Caco-2 (cell line): ENCODE measurements at regions of chr2 and their contacts with region 1.

Region 1: DNA sequence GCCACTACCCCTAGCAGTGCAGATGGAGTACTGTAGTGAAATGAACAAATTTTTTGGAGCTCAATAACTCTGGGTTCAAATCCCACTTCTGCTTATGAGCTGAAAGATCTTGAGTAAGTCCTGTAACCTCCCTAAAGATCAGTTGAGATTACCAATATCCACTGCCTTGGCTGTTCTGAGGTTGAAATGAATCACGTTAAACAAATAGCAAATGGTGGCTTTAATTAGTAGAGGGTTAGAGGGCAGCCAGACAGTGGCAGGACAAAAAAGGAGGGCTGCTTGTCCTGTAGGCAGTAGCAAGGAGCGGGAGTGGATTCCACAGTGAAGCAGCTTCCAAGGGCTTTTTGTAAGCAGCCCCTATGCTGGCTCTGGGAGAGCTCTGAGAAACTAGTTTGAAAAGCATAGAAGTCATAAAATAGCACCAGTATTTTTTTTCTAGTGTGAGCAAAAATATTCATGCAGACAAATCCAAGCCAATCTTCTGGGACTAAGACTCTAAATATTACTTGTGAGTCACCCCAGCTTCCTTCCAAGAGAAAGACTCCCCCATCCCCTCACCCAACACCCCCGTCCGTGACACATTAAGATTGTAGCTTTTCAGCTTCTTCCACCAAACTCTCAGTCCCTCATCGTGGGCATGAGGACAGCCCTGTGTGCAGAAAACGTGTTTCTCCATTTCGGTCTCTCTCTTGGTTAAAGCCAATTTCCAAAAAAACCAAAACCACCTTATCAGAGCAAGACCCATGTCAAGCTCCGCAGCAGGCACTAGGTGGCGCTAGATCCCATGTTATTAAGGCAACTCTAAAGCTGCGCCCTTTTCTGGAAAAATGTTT is 123.5 kb upstream of the LGALSL start:
- DNase-seq: peak; percentile 75 to 80
- H3K4me3 ChIP-seq: no peak overlapping the region
- H3K4me3 Mint-ChIP-seq: peak overlapping the region; percentile 30
- H3K27ac Mint-ChIP-seq: peak overlapping the region; percentile 46
- H3K4me1 ChIP-seq: no peaks in the 10 kb centered on the region
- H3K4me1 Mint-ChIP-seq: peaks cover 11% of the 10 kb centered on the region
- H3K27me3 ChIP-seq: no peaks in the 10 kb centered on the region
- H3K27me3 Mint-ChIP-seq: no peaks in the 10 kb centered on the region
- CTCF ChIP-seq: peak; percentile 90 to 95

Region 2: GRCh38 chr2:64052468-64053241 is 277.8 kb before region 1 on chr2:
- CTCF ChIA-PET with region 1: interaction called, 22 read pairs
- POLR2A ChIA-PET with region 1: no interaction called
- intact Hi-C with region 1: loop called (anchors 1 kb)
- DNase-seq: no peak
- H3K4me3 ChIP-seq: no peak overlapping the region
- H3K4me3 Mint-ChIP-seq: no peak overlapping the region
- H3K27ac Mint-ChIP-seq: peak overlapping the region; percentile 32
- H3K4me1 ChIP-seq: peaks cover 26% of the 10 kb centered on the region
- H3K4me1 Mint-ChIP-seq: peaks cover 41% of the 10 kb centered on the region
- H3K27me3 ChIP-seq: no peaks in the 10 kb centered on the region
- H3K27me3 Mint-ChIP-seq: no peaks in the 10 kb centered on the region
- CTCF ChIP-seq: no peak

Region 3: DNA sequence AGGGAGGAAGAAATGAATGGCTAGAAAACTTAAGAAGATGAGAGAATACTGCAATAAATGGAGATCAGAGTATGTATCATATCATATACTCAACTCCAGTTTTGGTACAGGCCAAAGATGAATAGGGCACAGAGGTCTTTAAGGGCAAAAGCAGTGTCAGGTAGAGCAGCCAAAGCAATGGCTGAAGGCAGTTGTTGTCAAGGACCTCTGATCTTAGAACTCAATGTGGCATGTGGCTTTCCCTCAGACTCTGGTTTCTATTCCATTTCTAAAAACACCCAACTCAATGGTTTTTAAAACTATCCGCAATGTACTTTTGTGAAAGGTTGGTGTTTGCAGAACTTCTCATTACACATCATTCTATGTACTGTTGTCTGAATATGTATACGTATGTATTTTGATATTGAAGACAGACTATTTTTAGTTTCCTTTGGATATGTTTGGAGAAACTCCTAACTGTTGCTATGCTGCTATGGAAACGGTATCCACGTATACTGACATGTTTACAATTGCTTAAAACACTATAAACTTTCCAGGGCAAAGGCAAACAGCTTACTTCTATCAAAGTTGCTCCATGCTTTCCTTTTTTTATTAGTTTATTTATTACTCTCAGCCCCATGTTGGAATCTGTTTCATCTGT is 128.2 kb before region 1 on chr2:
- CTCF ChIA-PET with region 1: no interaction called
- POLR2A ChIA-PET with region 1: no interaction called
- intact Hi-C with region 1: no loop called
- DNase-seq: peak in 1 of 2 experiments; percentile 17
- H3K4me3 ChIP-seq: no peak overlapping the region
- H3K4me3 Mint-ChIP-seq: no peak overlapping the region
- H3K27ac Mint-ChIP-seq: peak overlapping the region; percentile 81
- H3K4me1 ChIP-seq: peaks cover 29% of the 10 kb centered on the region
- H3K4me1 Mint-ChIP-seq: peaks cover 29% of the 10 kb centered on the region
- H3K27me3 ChIP-seq: no peaks in the 10 kb centered on the region
- H3K27me3 Mint-ChIP-seq: no peaks in the 10 kb centered on the region
- CTCF ChIP-seq: no peak

Region 4: DNA sequence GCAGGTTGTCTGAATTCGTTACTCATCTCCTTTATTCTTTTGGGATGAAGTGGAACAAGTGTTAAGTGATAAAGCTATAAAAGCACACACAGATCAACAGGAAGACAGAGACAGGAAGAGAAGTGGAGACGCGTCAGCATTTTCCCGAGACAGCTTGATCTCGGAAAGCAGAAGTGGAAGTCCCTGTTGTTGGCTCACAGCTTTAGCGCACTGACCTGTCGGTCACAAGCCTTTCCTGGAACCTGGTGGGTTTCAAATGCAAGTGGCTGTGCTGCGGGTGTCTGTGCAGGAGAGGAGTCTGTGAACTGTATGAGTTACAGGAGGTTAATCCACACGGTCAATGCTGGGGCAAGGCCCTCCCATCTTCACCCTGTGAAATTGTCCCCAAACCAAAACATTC is 69.7 kb before region 1 on chr2:
- CTCF ChIA-PET with region 1: no interaction called
- POLR2A ChIA-PET with region 1: no interaction called
- intact Hi-C with region 1: no loop called
- DNase-seq: no peak
- H3K4me3 ChIP-seq: no peak overlapping the region
- H3K4me3 Mint-ChIP-seq: no peak overlapping the region
- H3K27ac Mint-ChIP-seq: no peak overlapping the region
- H3K4me1 ChIP-seq: peaks cover 30% of the 10 kb centered on the region
- H3K4me1 Mint-ChIP-seq: peaks cover 31% of the 10 kb centered on the region
- H3K27me3 ChIP-seq: no peaks in the 10 kb centered on the region
- H3K27me3 Mint-ChIP-seq: no peaks in the 10 kb centered on the region
- CTCF ChIP-seq: no peak

Region 5: GRCh38 chr2:64391424-64391823 is 60.9 kb after region 1 on chr2:
- CTCF ChIA-PET with region 1: no interaction called
- POLR2A ChIA-PET with region 1: no interaction called
- intact Hi-C with region 1: loop called (anchors 5 kb)
- DNase-seq: peak; percentile 36 to 43
- H3K4me3 ChIP-seq: no peak overlapping the region
- H3K4me3 Mint-ChIP-seq: peak overlapping the region; percentile 12
- H3K27ac Mint-ChIP-seq: peak overlapping the region; percentile 63
- H3K4me1 ChIP-seq: peaks cover 49% of the 10 kb centered on the region
- H3K4me1 Mint-ChIP-seq: peaks cover 39% of the 10 kb centered on the region
- H3K27me3 ChIP-seq: no peaks in the 10 kb centered on the region
- H3K27me3 Mint-ChIP-seq: no peaks in the 10 kb centered on the region
- CTCF ChIP-seq: no peak

Region 6: DNA sequence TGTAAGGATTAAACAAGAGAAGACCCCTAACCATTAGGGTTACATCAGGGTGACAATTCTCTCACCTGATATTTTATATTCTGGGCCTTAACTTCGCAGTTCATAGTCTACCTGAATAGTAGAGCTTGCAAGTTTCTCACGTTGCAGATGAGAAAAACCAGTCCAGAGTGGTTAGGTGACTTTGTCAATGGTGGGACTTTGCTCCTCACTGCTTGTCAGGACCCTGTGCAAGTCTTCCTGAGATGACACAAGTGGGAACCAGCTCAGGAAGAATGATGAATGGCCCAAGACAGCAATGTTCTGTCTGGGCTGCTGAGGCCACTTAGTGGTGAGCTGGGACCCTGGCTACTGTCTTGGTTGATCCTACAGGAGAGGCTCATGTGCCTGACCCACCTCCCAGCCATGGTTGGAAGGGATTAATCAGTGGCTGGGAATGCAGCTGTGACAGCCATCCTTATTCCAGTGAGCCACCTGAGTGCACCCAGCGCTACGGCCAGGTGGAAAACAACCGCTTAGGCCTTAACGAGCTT is 140.3 kb after region 1 on chr2:
- CTCF ChIA-PET with region 1: interaction called, 18 read pairs
- POLR2A ChIA-PET with region 1: no interaction called
- intact Hi-C with region 1: loop called (anchors 1 kb)
- DNase-seq: peak; percentile 48 to 66
- H3K4me3 ChIP-seq: no peak overlapping the region
- H3K4me3 Mint-ChIP-seq: no peak overlapping the region
- H3K27ac Mint-ChIP-seq: no peak overlapping the region
- H3K4me1 ChIP-seq: no peaks in the 10 kb centered on the region
- H3K4me1 Mint-ChIP-seq: no peaks in the 10 kb centered on the region
- H3K27me3 ChIP-seq: no peaks in the 10 kb centered on the region
- H3K27me3 Mint-ChIP-seq: no peaks in the 10 kb centered on the region
- CTCF ChIP-seq: peak in 1 of 2 experiments; percentile 30

Region 7: DNA sequence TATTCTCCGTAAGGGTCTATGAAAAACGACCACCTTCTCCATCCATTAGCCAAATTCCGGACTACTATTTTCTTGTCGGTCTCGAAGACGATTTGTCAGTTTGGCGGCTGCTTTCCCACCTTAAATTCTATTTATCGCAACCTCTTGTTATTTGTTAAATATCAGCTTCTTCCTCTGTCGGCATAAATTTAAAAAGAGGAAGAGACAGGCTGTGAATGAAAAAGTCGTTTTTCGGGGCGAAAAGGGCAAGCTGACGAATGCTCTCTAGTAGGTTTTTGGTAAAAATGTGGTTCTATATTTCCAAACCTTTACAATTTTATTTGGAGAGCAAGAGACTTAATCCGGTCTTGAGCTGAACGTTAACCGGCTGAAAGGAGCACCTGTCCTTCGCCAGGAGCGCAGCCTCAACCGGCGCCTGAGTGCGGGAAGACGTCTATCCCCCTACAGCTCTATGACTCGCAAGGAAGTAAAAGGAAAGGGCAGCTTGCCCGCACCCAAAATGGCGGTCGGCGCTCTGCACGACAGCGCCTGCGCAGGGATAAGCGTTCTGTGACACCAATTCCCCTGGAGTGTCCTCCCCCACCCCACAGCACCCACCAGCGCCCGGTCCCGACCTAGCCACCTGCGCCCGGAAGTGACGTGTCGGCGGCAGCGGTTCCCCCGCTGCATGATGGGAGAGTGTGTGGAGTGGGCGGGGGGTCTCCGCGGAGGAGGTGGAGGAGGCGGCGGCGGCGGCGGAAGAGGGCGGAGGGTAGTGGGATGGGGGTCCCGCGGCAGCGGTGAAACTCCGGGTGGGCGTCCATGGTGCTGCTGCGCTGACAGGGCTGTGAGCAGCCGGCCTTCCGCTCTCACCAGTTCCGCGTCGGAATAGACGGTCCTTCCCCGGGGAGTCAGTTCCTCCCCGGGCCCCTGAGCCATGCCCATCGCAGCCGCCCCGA is 193.4 kb after region 1 on chr2 and contains the start of gene AFTPH:
- CTCF ChIA-PET with region 1: interaction called, 7 read pairs
- POLR2A ChIA-PET with region 1: interaction called, 3 read pairs
- intact Hi-C with region 1: loop called (anchors 1 kb)
- DNase-seq: peak; percentile 99 to 100
- H3K4me3 ChIP-seq: peak within 1 kb of the TSS; percentile 95
- H3K4me3 Mint-ChIP-seq: peak within 1 kb of the TSS; percentile 87
- H3K27ac Mint-ChIP-seq: peak within 1 kb of the TSS; percentile 94
- H3K4me1 ChIP-seq: peaks cover 4% of the 10 kb centered on the region; the same call in 1 of the 2 replicates
- H3K4me1 Mint-ChIP-seq: no peaks in the 10 kb centered on the region
- H3K27me3 ChIP-seq: no peaks in the 10 kb centered on the region
- H3K27me3 Mint-ChIP-seq: peaks cover 2% of the 10 kb centered on the region
- CTCF ChIP-seq: no peak
- total RNA-seq, gene AFTPH: 29.3 and 30.1 TPM in 2 replicates

Region 8: GRCh38 chr2:64586883-64587481 is 256.5 kb after region 1 on chr2:
- CTCF ChIA-PET with region 1: interaction called, 5 read pairs
- POLR2A ChIA-PET with region 1: no interaction called
- intact Hi-C with region 1: loop called (anchors 1 kb)
- DNase-seq: peak in 1 of 2 experiments; percentile 33
- H3K4me3 ChIP-seq: no peak overlapping the region
- H3K4me3 Mint-ChIP-seq: no peak overlapping the region
- H3K27ac Mint-ChIP-seq: no peak overlapping the region
- H3K4me1 ChIP-seq: no peaks in the 10 kb centered on the region
- H3K4me1 Mint-ChIP-seq: no peaks in the 10 kb centered on the region
- H3K27me3 ChIP-seq: no peaks in the 10 kb centered on the region
- H3K27me3 Mint-ChIP-seq: no peaks in the 10 kb centered on the region
- CTCF ChIP-seq: peak; percentile 48 to 63